ENCODE measurements at regions of chr4 and their contacts with region 1.

Region 1: DNA sequence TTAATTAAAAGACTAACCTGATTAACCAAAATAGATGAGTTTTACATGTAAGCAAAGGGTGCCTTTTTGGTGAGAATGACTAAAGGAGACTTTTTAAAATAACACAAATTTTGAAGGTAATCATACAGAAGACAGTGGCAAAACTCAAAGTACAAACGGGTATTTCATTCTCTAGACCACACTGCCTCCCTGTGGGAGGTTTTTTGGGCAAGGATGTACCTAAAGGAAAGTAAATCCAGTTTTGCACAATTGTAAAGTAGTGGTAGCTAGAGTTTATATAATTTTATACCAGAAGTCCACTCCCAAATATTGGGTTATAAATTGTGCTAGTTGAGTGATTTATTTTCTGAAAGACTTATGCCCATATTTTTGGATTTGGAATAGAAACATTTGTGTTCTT is 201.0 kb downstream of the PAPSS1 start:
- DNase-seq: no peak
- H3K4me3 ChIP-seq: no peak overlapping the region
- H3K27ac ChIP-seq: no peak overlapping the region
- H3K4me1 ChIP-seq: no peaks in the 10 kb centered on the region
- H3K27me3 ChIP-seq: no peaks in the 10 kb centered on the region
- CTCF ChIP-seq: peak in 1 of 3 experiments; percentile 35

Region 2: DNA sequence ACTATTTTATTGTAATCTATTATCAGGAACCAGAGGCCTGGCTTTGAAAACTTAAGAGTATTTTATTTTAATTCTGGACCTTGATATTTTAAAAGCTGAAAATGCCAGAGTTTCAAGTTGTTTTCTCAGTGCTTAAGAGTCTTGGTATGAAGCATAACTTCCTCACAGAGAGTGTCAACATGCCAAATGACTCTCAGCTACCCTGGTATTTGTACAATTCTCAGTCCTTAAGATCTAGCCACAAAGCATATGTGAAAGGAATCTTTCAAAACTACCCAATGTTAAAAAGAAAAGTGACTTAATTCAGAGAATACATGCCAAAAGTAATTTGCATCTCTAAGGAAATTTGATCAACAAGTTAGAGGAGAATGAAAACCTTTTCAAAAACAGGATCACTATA is 654.8 kb before region 1 on chr4:
- intact Hi-C with region 1: no loop called
- DNase-seq: no peak
- H3K4me3 ChIP-seq: no peak overlapping the region
- H3K27ac ChIP-seq: peak overlapping the region; percentile 31 to 58
- H3K4me1 ChIP-seq: no peaks in the 10 kb centered on the region
- H3K27me3 ChIP-seq: no peaks in the 10 kb centered on the region
- CTCF ChIP-seq: no peak

Region 3: GRCh38 chr4:107037199-107037584 is 481.9 kb before region 1 on chr4:
- intact Hi-C with region 1: loop called (anchors 10 kb)
- DNase-seq: peak in 1 of 2 donors; percentile 68
- H3K4me3 ChIP-seq: peak overlapping the region; percentile 49 to 75
- H3K27ac ChIP-seq: no peak overlapping the region
- H3K4me1 ChIP-seq: no peaks in the 10 kb centered on the region
- H3K27me3 ChIP-seq: no peaks in the 10 kb centered on the region
- CTCF ChIP-seq: peak; percentile 25 to 65 (median 54)

Region 4: DNA sequence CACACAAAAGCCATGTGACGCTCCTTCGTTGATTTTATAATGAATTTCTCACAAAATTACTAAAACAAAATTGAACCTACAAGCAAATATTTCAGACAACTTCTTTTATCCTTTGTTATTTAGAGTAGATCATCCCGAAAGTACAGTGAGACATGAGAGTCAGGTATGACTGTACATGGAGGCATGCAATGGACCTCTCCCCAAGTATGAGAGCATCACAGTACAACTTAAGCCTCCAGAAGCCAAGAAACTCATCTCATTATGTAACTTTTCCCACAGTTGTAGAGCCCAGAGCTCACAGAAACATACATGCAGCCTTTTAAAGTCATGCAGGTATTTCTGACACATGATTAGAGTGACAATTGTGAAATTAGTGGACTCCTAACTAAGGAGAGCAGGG is 33.3 kb after region 1 on chr4:
- intact Hi-C with region 1: no loop called
- DNase-seq: no peak
- H3K4me3 ChIP-seq: no peak overlapping the region
- H3K27ac ChIP-seq: no peak overlapping the region
- H3K4me1 ChIP-seq: no peaks in the 10 kb centered on the region
- H3K27me3 ChIP-seq: no peaks in the 10 kb centered on the region
- CTCF ChIP-seq: no peak